WTC11 (cell line): ENCODE measurements at regions of chr2 and their contacts with region 1.

Region 1: GRCh38 chr2:113203901-113204519 is 30.2 kb downstream of the PSD4 start:
- DNase-seq: peak; percentile 86
- ATAC-seq: peak; percentile 76
- H3K4me3 Mint-ChIP-seq: no peak overlapping the region
- H3K27ac Mint-ChIP-seq: no peak overlapping the region
- H3K4me1 Mint-ChIP-seq: peaks cover 6% of the 10 kb centered on the region; the same call in 1 of the 2 replicates
- H3K27me3 Mint-ChIP-seq: peaks cover 4% of the 10 kb centered on the region; the same call in 1 of the 2 replicates
- CTCF ChIP-seq: peak; percentile 66

Region 2: DNA sequence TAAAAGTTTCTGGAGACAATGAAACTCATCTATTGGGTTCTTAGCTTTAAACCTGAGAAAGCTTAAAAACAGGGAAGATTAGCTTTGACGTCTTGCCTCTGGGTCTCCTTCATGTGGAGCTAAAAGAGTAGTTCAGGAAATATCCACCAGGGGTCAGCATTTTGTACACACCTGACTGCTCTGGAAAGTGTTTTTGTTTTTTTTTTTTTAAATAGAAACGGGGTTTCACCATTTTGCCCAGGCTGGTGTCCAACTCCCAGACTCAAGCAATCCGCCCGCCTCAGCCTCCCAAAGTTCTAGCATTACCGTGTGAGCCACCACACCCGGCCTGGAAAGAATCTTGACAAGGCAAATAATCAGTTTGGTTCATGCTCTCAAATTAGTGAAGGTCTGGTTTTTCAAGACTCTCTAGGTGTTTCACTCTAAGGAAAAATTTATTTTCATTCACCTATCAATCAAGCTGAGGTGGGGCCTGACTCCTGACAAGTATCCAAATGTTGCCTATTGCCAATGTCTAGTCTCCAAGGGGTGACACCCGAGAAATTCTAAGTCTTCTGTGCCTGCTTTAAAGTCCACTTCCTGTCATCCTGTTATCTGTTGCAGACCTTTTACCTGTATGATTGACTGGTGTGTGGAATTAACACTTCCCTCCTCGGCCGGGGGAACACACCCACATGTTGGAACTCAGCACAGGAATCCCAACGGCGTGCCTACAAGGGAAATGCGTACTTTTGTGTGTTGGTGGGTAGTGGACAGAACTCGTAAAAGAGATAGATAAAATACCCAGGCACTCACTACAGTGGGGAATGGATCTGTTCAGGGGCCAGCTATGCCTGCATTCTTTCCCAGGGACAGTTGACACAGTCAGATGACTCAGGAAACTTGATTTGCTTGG is 65.3 kb before region 1 on chr2:
- CTCF ChIA-PET with region 1: interaction called, 155 read pairs
- POLR2A ChIA-PET with region 1: interaction called, 3 read pairs
- DNase-seq: no peak
- ATAC-seq: peak; percentile 65
- H3K4me3 Mint-ChIP-seq: no peak overlapping the region
- H3K27ac Mint-ChIP-seq: no peak overlapping the region
- H3K4me1 Mint-ChIP-seq: no peaks in the 10 kb centered on the region
- H3K27me3 Mint-ChIP-seq: no peaks in the 10 kb centered on the region
- CTCF ChIP-seq: peak; percentile 68

Region 3: GRCh38 chr2:113225263-113226259 is 21.6 kb after region 1 on chr2:
- CTCF ChIA-PET with region 1: interaction called, 13 read pairs
- POLR2A ChIA-PET with region 1: no interaction called
- DNase-seq: peak; percentile 45
- ATAC-seq: peak; percentile 79
- H3K4me3 Mint-ChIP-seq: peak overlapping the region; percentile 25; the same call in 1 of the 2 replicates
- H3K27ac Mint-ChIP-seq: no peak overlapping the region
- H3K4me1 Mint-ChIP-seq: peaks cover 24% of the 10 kb centered on the region
- H3K27me3 Mint-ChIP-seq: no peaks in the 10 kb centered on the region; the same call in 1 of the 2 replicates
- CTCF ChIP-seq: no peak

Region 4: GRCh38 chr2:113248997-113249770 is 45.2 kb after region 1 on chr2:
- CTCF ChIA-PET with region 1: interaction called, 18 read pairs
- POLR2A ChIA-PET with region 1: no interaction called
- DNase-seq: peak; percentile 81
- ATAC-seq: peak; percentile 89
- H3K4me3 Mint-ChIP-seq: no peak overlapping the region
- H3K27ac Mint-ChIP-seq: no peak overlapping the region
- H3K4me1 Mint-ChIP-seq: peaks cover 5% of the 10 kb centered on the region
- H3K27me3 Mint-ChIP-seq: peaks cover 6% of the 10 kb centered on the region
- CTCF ChIP-seq: peak; percentile 94

Region 5: DNA sequence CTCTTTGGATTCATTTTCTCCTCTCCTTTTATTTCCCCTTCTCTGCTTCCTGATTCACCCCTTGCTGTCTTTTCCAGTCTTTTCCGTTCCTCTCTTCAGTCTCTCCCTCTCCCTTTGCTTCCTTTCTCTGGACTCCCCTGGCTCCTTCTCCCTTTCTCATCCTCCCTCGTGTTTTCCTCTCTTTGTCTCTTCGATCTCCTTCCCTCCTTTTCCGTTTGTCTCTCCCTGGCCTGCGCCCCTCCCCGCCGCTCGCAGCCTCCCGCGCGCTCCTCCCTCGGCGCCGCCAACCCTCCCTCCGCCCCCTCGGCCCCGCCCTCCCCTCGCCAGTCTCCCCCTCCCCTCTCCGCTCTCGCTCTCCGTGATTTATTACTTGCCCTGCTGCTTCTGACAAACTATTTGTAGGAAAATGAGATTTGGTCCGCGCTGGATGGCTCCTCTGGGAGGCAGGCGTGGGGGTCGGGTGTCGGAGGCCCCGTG is 120.7 kb after region 1 on chr2:
- CTCF ChIA-PET with region 1: interaction called, 10 read pairs
- POLR2A ChIA-PET with region 1: no interaction called
- DNase-seq: peak; percentile 68
- ATAC-seq: peak; percentile 81
- H3K4me3 Mint-ChIP-seq: peak overlapping the region; percentile 75
- H3K27ac Mint-ChIP-seq: no peak overlapping the region
- H3K4me1 Mint-ChIP-seq: peaks cover 13% of the 10 kb centered on the region
- H3K27me3 Mint-ChIP-seq: peaks cover 47% of the 10 kb centered on the region
- CTCF ChIP-seq: no peak

Region 6: DNA sequence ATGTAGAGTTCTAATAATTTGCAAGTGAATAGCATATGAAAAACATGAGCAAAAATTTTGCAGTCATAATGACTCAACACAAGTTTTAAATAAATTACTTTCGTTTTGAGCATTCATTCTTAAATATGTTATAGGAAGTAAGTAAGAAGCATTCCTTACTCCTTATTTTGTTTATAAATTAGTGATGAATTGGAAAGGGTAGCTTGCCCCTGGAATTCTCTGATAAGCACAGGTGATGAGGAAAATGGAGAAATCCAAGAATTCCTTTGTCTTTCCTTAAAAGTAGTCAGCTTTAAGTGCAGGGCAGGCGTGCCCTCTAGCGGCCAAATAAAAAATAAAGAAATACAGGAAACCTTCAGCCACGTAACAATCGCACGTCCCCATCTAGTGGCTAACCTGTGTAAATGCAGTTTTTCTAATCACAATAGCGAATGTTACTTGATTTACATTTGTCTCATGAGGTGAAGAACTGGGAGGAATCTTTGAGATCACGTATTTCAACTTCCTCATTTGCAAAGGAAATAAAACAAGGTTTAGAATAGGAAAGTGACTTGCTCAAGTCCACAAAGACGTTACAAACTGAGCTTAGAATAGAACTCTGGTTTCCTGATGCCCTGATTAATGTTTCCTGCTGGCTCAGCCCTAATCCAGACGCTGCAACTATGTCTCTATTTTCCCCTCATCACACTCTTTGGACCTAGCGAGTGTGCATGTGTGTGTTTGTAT is 186.3 kb after region 1 on chr2:
- CTCF ChIA-PET with region 1: interaction called, 33 read pairs
- POLR2A ChIA-PET with region 1: no interaction called
- DNase-seq: peak; percentile 46
- ATAC-seq: peak; percentile 55
- H3K4me3 Mint-ChIP-seq: no peak overlapping the region
- H3K27ac Mint-ChIP-seq: no peak overlapping the region
- H3K4me1 Mint-ChIP-seq: 0 out of 2 replicates have a peak, but pooled peaks cover 3% of the 10 kb centered on the region
- H3K27me3 Mint-ChIP-seq: peaks cover 6% of the 10 kb centered on the region; the same call in 1 of the 2 replicates
- CTCF ChIP-seq: peak; percentile 75